Calu3 (cell line): ENCODE measurements at regions of chr2 and their contacts with region 1.

Region 1: GRCh38 chr2:55771612-55772011 is 78.0 kb upstream of the PNPT1 start:
- DNase-seq: no peak
- H3K4me3 Mint-ChIP-seq: peak overlapping the region; percentile 29
- H3K27ac Mint-ChIP-seq: peak overlapping the region; percentile 54
- H3K4me1 Mint-ChIP-seq: peaks cover 33% of the 10 kb centered on the region
- H3K27me3 Mint-ChIP-seq: no peaks in the 10 kb centered on the region
- CTCF ChIP-seq: peak; percentile 50

Region 2: DNA sequence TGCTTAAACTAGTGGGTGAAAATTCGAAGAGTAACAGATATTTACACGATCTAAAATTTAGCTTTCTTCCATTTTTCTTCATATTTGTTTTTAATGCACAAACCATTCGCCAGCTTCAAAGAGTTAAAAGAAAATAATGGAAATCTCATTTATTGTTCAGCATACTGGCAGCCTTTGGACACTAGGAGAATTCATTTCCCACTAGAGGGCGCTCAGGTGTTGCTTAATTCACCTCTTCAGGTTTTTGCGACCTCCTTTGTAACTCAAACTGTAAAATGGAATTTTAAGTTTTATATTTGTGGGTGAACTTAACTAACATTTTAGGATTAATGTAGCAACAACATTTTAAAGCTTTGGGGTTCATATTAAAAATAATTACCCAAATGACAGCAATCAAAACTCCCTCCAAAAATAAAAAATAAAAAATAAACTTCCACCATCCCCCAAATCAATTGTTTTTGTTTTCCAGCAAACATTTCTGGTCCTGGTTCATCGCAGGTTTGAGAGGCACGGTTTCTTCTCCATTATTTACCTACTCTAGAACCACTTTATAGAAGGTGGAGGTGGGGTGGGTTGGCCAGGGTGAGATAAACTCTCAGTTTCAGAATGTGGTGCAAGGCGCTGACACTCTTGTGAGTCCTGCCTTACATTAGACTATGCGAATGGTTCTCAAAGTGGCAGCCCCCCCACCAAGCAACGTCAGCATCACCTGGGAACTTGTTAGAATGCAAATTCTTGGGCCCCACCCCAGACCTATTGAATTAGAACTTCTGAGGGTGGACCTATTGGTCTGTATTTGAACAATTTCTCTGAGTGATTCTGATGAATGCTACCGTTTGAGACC is 53.2 kb before region 1 on chr2:
- CTCF ChIA-PET with region 1: interaction called, 8 read pairs
- intact Hi-C with region 1: loop called (anchors 1 kb)
- DNase-seq: peak; percentile 75
- H3K4me3 Mint-ChIP-seq: no peak overlapping the region
- H3K27ac Mint-ChIP-seq: no peak overlapping the region
- H3K4me1 Mint-ChIP-seq: no peaks in the 10 kb centered on the region
- H3K27me3 Mint-ChIP-seq: no peaks in the 10 kb centered on the region
- CTCF ChIP-seq: no peak

Region 3: GRCh38 chr2:55885129-55885943 is 113.7 kb after region 1 on chr2:
- CTCF ChIA-PET with region 1: no interaction called
- intact Hi-C with region 1: loop called (anchors 1 kb)
- DNase-seq: peak; percentile 38
- H3K4me3 Mint-ChIP-seq: no peak overlapping the region
- H3K27ac Mint-ChIP-seq: peak overlapping the region; percentile 91
- H3K4me1 Mint-ChIP-seq: peaks cover 31% of the 10 kb centered on the region
- H3K27me3 Mint-ChIP-seq: no peaks in the 10 kb centered on the region
- CTCF ChIP-seq: no peak

Region 4: GRCh38 chr2:56009758-56010458 is 238.3 kb after region 1 on chr2:
- CTCF ChIA-PET with region 1: interaction called, 18 read pairs
- intact Hi-C with region 1: loop called (anchors 1 kb)
- DNase-seq: no peak
- H3K4me3 Mint-ChIP-seq: no peak overlapping the region
- H3K27ac Mint-ChIP-seq: no peak overlapping the region
- H3K4me1 Mint-ChIP-seq: no peaks in the 10 kb centered on the region
- H3K27me3 Mint-ChIP-seq: no peaks in the 10 kb centered on the region
- CTCF ChIP-seq: peak; percentile 26

Region 5: DNA sequence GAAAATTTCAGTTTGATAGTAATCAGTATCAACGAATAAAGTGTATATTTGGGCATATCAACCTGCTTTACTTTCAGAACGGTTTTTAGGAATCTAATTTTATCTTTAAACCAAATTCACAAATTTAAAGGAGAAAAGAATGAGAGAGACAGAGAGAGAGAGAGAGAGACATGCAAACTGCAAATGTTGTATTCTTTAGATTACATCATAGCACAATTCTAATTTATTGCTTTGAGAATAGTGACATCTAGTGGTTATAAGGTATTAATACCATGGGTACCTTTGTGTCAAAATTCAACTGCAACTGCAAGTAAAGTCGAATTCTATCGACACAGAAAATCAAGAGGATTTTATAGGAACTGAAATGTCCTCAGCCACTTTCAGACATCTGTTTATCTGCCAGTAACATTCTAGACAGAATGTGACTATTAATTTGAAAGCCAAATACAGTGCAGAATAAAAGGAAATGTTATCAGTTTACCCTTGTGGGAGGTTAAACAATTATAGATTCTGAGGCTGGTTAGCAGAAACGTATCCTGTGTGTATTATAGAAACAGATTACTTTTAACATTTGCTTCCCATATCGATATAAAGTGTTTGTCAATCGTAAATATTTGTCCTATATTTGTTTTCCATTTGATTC is 1745.2 kb after region 1 on chr2:
- CTCF ChIA-PET with region 1: no interaction called
- intact Hi-C with region 1: loop called (anchors 10 kb)
- DNase-seq: no peak
- H3K4me3 Mint-ChIP-seq: no peak overlapping the region
- H3K27ac Mint-ChIP-seq: no peak overlapping the region
- H3K4me1 Mint-ChIP-seq: peaks cover 8% of the 10 kb centered on the region
- H3K27me3 Mint-ChIP-seq: no peaks in the 10 kb centered on the region
- CTCF ChIP-seq: no peak